Left lung (tissue), 14 donors: ENCODE measurements at regions of chr5 and their contacts with region 1.

Region 1: GRCh38 chr5:135560858-135561257 is 17.9 kb downstream of the CXCL14 start:
- DNase-seq: peak; percentile 79 to 87 (median 82)
- ATAC-seq: peak; percentile 98
- H3K4me3 ChIP-seq: no peak overlapping the region
- H3K27ac ChIP-seq: no peak overlapping the region
- H3K4me1 ChIP-seq: peaks cover 0 to 7% of the 10 kb centered on the region in 2 donors
- H3K27me3 ChIP-seq: peaks cover 0 to 48% of the 10 kb centered on the region in 2 donors
- CTCF ChIP-seq: peak; percentile 75 to 81

Region 2: GRCh38 chr5:135162661-135163265 is 398.1 kb before region 1 on chr5:
- intact Hi-C with region 1: no loop called
- DNase-seq: no peak
- ATAC-seq: no peak
- H3K4me3 ChIP-seq: no peak overlapping the region
- H3K27ac ChIP-seq: no peak overlapping the region
- H3K4me1 ChIP-seq: no peaks in the 10 kb centered on the region
- H3K27me3 ChIP-seq: peaks cover 3 to 30% of the 10 kb centered on the region in 2 donors
- CTCF ChIP-seq: no peak

Region 3: DNA sequence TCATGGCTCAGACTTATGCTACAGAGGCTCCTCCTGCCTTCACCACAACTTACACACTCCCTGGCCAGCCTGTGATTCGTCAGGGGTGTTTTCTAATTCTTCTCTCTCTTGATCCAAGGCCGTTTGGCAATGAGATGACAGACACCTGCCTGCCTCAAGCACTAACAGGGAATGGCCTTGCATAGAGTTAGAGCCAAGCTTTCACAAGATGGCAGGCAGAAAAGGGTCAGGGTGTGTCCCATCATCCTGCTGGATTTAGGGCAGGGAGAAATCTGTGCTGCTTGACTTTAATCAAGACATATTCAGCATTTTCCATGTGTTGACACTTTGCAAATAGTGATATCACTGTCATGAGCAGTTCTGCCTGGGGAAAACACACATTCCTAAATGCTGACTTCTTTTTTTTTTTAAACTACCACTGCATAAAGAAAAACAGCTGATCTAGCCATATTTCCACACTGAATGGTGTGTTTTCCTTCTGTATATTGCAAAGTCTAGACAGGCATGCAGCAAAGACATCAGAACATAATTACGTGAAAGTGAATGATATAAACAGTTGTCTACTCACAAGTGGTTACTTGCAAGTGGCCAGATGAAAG is 178.6 kb after region 1 on chr5:
- intact Hi-C with region 1: loop called in 1 of 2 experiments (anchors 10 kb)
- DNase-seq: peak in 2 of 4 donors; percentile 62 to 73
- ATAC-seq: peak; percentile 76
- H3K4me3 ChIP-seq: no peak overlapping the region
- H3K27ac ChIP-seq: peak overlapping the region in 1 of 2 donors; percentile 62
- H3K4me1 ChIP-seq: no peaks in the 10 kb centered on the region
- H3K27me3 ChIP-seq: no peaks in the 10 kb centered on the region
- CTCF ChIP-seq: no peak